Gastrocnemius medialis (tissue), 4 donors: ENCODE measurements at regions of chr11 and their contacts with region 1.

Region 1: GRCh38 chr11:122197055-122197987 is 81.3 kb upstream of the BLID start:
- DNase-seq: no peak
- ATAC-seq: no peak
- H3K4me3 ChIP-seq: no peak overlapping the region
- H3K27ac ChIP-seq: no peak overlapping the region
- H3K4me1 ChIP-seq: peaks cover 0 to 17% of the 10 kb centered on the region in 2 donors
- H3K27me3 ChIP-seq: no peaks in the 10 kb centered on the region
- CTCF ChIP-seq: no peak
- POLR2A ChIP-seq: no peak

Region 2: GRCh38 chr11:121800731-121801393 is 396.5 kb before region 1 on chr11:
- in situ Hi-C with region 1: no loop called
- intact Hi-C with region 1: no loop called
- DNase-seq: no peak
- ATAC-seq: no peak
- H3K4me3 ChIP-seq: no peak overlapping the region
- H3K27ac ChIP-seq: no peak overlapping the region
- H3K4me1 ChIP-seq: no peaks in the 10 kb centered on the region
- H3K27me3 ChIP-seq: no peaks in the 10 kb centered on the region
- CTCF ChIP-seq: no peak
- POLR2A ChIP-seq: no peak

Region 3: DNA sequence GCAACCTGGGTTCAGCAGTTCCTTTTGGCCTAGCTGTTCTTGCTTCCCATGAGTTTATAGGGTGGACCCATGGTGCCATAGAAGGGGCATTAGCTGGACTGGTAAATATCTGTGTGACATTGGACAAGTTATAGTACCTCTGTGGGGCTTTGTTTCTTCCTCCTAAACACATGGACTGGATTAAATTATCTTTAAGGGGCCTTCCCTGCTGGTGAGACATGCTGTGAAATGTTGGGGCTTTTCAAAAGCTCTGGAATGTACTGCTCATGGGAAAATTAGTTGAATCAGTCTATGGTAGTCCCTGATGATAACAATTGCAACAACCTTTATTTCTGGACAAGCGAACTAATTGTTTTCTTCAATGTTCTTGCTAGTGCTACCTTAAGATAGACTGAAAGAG is 357.5 kb before region 1 on chr11:
- in situ Hi-C with region 1: no loop called
- intact Hi-C with region 1: no loop called
- DNase-seq: no peak
- ATAC-seq: no peak
- H3K4me3 ChIP-seq: no peak overlapping the region
- H3K27ac ChIP-seq: no peak overlapping the region
- H3K4me1 ChIP-seq: no peaks in the 10 kb centered on the region
- H3K27me3 ChIP-seq: no peaks in the 10 kb centered on the region
- CTCF ChIP-seq: no peak
- POLR2A ChIP-seq: no peak

Region 4: GRCh38 chr11:122159173-122159721 is 38.1 kb before region 1 on chr11:
- in situ Hi-C with region 1: no loop called
- intact Hi-C with region 1: loop called (anchors 5 kb)
- DNase-seq: peak in 1 of 2 donors; percentile 23
- ATAC-seq: no peak
- H3K4me3 ChIP-seq: peak overlapping the region; percentile 34 to 58 (median 46)
- H3K27ac ChIP-seq: peak overlapping the region; percentile 64 to 76 (median 68)
- H3K4me1 ChIP-seq: peaks cover 13 to 16% of the 10 kb centered on the region in 2 donors
- H3K27me3 ChIP-seq: no peaks in the 10 kb centered on the region
- CTCF ChIP-seq: no peak
- POLR2A ChIP-seq: no peak